Thyroid gland (tissue), 4 donors: ENCODE measurements at regions of chr20 and their contacts with region 1.

Region 1: DNA sequence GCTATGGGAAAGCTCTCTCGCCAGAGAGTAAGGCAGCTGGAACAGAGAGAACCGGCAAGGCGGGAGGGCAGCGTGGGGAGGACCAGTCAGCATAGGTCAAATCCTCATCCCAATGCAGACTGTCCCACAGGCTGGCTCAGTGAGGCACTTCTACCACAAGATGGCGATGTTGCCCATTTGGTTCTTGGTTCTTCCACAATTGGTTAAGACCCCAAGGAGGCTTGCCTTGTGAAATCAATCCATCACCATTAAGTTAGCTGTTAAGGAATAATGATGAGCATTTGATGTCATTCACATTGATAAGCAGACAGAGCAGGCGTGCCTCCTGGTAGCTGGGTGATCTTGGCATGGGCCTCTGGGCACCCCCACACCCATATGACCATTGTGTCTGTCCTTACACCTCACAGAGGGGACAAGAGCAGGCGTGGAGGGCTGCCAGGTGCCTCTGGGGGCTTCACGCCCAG is 2.4 kb downstream of the CSTL1 start:
- DNase-seq: peak; percentile 35 to 39
- H3K4me3 ChIP-seq: no peak overlapping the region
- H3K27ac ChIP-seq: no peak overlapping the region
- H3K4me1 ChIP-seq: no peaks in the 10 kb centered on the region
- H3K27me3 ChIP-seq: no peaks in the 10 kb centered on the region
- CTCF ChIP-seq: peak in 5 of 6 experiments; percentile 41 to 76 (median 48)
- POLR2A ChIP-seq: no peak

Region 2: DNA sequence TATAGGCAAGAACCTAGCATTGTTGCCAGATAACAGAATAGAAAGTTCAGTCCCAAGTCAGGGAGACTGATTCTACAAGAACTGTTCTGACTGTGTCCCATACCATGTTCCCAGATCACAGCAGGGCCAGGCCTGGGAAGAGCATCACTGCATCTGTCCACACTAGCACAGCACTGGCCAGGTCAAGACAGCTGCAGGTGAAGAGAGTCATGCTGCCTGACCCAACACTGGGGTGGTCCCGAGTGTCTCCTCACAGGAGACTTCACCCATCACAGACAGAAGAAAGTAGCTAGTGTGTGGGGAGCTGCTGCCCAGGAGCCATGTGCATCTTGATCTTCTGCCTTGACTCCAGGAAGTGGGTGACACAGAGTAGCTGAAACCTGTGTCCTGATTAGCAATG is 127.7 kb after region 1 on chr20:
- intact Hi-C with region 1: no loop called
- DNase-seq: no peak
- H3K4me3 ChIP-seq: no peak overlapping the region
- H3K27ac ChIP-seq: no peak overlapping the region
- H3K4me1 ChIP-seq: no peaks in the 10 kb centered on the region
- H3K27me3 ChIP-seq: no peaks in the 10 kb centered on the region
- CTCF ChIP-seq: no peak
- POLR2A ChIP-seq: no peak

Region 3: DNA sequence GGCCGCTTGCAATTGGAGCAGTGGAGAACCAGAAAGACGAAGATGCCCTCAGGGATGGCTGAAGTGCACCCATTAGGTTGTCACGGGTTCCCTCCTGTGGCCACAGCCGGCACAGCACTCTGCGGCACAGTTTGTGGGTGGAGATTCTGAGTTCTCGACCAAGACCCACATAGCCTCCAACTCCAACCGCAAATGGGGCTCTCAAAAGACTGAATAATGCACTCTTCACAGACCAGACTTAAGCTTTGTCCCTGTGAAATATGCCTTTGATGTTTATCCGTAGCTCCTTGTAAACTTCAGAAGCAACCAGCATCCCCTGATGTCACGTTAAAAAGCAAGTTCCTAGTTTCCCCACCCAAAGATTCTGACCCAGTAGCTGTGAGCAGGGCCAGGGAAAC is 164.8 kb after region 1 on chr20:
- intact Hi-C with region 1: loop called (anchors 10 kb)
- DNase-seq: peak; percentile 61 to 69
- H3K4me3 ChIP-seq: no peak overlapping the region
- H3K27ac ChIP-seq: no peak overlapping the region
- H3K4me1 ChIP-seq: no peaks in the 10 kb centered on the region
- H3K27me3 ChIP-seq: no peaks in the 10 kb centered on the region
- CTCF ChIP-seq: peak; percentile 55 to 91 (median 68)
- POLR2A ChIP-seq: no peak

Region 4: GRCh38 chr20:24018796-24019195 is 576.9 kb after region 1 on chr20:
- intact Hi-C with region 1: no loop called
- DNase-seq: no peak
- H3K4me3 ChIP-seq: no peak overlapping the region
- H3K27ac ChIP-seq: no peak overlapping the region
- H3K4me1 ChIP-seq: no peaks in the 10 kb centered on the region
- H3K27me3 ChIP-seq: no peaks in the 10 kb centered on the region
- CTCF ChIP-seq: no peak
- POLR2A ChIP-seq: no peak